Ovary (tissue), 10 donors: ENCODE measurements at regions of chr2 and their contacts with region 1.

Region 1: DNA sequence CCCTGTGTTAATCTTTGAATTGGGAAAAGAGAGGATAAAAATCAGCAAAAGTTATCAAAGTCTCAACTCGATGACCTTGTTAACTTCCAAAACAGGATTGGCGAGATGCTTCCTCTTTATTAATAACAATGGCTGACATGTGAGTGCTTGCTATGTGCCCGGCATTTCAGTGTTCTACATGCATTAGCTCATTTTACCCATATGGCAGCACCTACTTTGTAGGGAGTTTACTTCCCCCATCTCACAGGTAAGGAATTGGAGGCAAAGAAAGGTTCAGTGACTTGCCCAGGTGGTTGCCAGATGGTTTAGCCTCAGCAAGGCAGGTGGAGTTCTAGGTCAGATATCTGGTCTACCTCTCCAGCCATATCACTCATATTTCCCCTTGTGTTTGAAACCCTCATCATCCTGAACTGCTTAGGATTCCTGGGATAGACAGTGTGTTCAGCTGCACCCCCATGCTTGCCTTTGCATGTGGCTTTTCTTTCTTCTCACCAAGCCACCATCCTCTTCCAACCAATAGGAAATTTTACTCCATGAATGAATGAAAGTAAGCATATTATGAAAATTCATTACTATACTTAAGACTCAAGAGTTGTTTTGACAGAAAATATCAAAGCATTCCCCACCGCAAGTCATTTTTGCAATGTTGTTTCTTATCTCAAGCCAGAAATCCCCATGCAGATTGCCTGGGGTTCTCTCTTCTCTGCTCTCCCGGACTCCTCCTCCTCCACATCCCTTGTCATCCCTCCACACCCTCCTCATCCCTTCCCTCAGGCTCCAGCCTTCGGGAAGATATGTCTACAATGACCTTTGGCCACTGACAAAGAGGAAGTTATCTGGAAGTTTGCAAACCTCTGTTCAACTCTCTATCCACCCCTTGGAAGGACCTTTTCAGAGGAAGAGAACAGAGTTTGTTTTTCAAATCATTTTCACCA is 12.2 kb downstream of the TFCP2L1 start:
- DNase-seq: no peak
- H3K4me3 ChIP-seq: no peak overlapping the region
- H3K27ac ChIP-seq: no peak overlapping the region
- H3K4me1 ChIP-seq: no peaks in the 10 kb centered on the region
- H3K27me3 ChIP-seq: no peaks in the 10 kb centered on the region
- CTCF ChIP-seq: no peak
- EP300 ChIP-seq: no peak
- POLR2A ChIP-seq: no peak

Region 2: GRCh38 chr2:121583555-121583954 is 310.7 kb after region 1 on chr2:
- intact Hi-C with region 1: loop called in 1 of 4 experiments (anchors 10 kb)
- DNase-seq: no peak
- H3K4me3 ChIP-seq: no peak overlapping the region
- H3K27ac ChIP-seq: no peak overlapping the region
- H3K4me1 ChIP-seq: no peaks in the 10 kb centered on the region
- H3K27me3 ChIP-seq: no peaks in the 10 kb centered on the region
- CTCF ChIP-seq: no peak
- EP300 ChIP-seq: no peak
- POLR2A ChIP-seq: no peak